ENCODE measurements at regions of chr6 and their contacts with region 1.

Region 1: GRCh38 chr6:24720604-24721460 is 1.9 kb upstream of the C6orf62 start:
- DNase-seq: peak; percentile 97
- ATAC-seq: peak; percentile 82
- H3K4me3 Mint-ChIP-seq: peak overlapping the region; percentile 93
- H3K27ac Mint-ChIP-seq: peak overlapping the region; percentile 99
- H3K4me1 Mint-ChIP-seq: peaks cover 43% of the 10 kb centered on the region
- H3K27me3 Mint-ChIP-seq: no peaks in the 10 kb centered on the region
- CTCF ChIP-seq: no peak

Region 2: DNA sequence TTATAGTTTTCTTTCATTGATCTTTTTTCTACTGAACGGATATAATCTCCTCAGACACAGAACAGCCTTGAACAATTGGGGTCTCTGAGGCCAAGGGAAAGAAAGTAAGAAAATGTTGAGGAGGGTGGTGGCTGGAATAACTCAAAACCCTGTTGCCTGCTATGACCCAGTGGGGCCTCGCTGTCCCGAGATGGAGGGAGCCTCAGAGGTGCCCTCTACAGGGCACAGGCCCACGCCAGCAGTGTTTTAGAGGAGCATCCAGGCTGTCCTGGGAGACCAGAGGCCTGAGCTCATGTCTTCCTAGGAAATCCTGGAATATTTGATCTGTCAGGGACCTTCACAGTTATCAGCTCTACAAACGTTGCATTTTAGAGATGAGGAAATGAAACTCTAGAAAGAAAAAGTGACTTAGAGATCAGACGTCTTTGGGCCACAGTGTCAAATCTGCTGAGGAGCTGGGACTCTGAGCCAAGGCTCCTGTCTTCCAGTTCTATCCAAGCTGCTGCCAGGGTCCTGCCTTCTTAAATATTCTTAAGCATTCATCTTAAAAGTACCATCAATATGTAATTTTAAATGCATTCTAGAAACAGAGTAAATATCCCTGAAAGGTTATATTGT is 199.8 kb before region 1 on chr6:
- CTCF ChIA-PET with region 1: interaction called, 3 read pairs
- POLR2A ChIA-PET with region 1: interaction called, 12 read pairs
- intact Hi-C with region 1: no loop called
- DNase-seq: peak; percentile 35
- ATAC-seq: peak; percentile 40
- H3K4me3 Mint-ChIP-seq: peak overlapping the region; percentile 42
- H3K27ac Mint-ChIP-seq: peak overlapping the region; percentile 88
- H3K4me1 Mint-ChIP-seq: peaks cover 62% of the 10 kb centered on the region
- H3K27me3 Mint-ChIP-seq: no peaks in the 10 kb centered on the region
- CTCF ChIP-seq: no peak

Region 3: GRCh38 chr6:24666641-24667377 is 54.0 kb before region 1 on chr6 and contains the starts of genes ACOT13 and TDP2:
- CTCF ChIA-PET with region 1: interaction called, 3 read pairs
- POLR2A ChIA-PET with region 1: interaction called, 16 read pairs
- intact Hi-C with region 1: loop called (anchors 1 kb)
- DNase-seq: peak; percentile 92
- ATAC-seq: peak; percentile 94
- H3K4me3 Mint-ChIP-seq: peak within 1 kb of the TSS; percentile 99
- H3K27ac Mint-ChIP-seq: peak within 1 kb of the TSS; percentile 96
- H3K4me1 Mint-ChIP-seq: peaks cover 46% of the 10 kb centered on the region
- H3K27me3 Mint-ChIP-seq: no peaks in the 10 kb centered on the region
- CTCF ChIP-seq: no peak
- total RNA-seq, gene ACOT13: 12.0 and 13.8 TPM in 2 replicates
- total RNA-seq, gene TDP2: 48.9 and 51.1 TPM in 2 replicates

Region 4: DNA sequence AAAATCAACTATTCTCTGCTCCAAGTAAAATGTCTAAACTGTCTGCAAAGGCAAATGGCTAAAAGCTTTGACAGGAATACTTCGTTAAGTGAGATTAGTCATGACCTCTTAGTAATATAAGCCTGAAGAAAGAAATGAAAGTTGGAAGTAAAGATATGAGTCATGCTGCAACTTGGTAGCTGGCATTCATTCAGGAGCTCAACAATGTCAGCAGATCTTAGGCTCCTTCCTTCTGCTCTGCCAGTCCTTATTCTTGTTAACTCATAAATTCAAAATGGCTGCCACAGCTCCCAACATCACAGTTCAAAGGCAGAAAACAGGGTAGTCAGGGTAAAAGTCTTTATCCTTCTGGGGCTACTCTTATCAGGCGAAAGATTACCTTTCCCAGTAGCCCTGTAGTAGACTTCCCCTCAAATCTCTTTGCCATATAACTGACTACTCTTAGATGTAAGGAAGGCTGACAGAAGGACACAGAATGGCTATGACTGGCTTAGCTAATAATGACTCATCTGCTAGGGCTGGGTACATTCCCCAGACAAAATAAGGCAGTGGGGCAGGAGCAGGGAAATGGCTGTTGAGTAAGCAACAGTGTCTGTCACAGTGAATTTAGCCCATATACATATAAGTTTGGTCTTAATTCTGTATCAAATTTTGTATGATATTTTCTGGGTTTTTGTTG is 22.6 kb after region 1 on chr6:
- CTCF ChIA-PET with region 1: no interaction called
- POLR2A ChIA-PET with region 1: interaction called, 40 read pairs
- intact Hi-C with region 1: loop called (anchors 1 kb)
- DNase-seq: no peak
- ATAC-seq: peak; percentile 78
- H3K4me3 Mint-ChIP-seq: peak overlapping the region; percentile 55
- H3K27ac Mint-ChIP-seq: peak overlapping the region; percentile 85
- H3K4me1 Mint-ChIP-seq: peaks cover 31% of the 10 kb centered on the region
- H3K27me3 Mint-ChIP-seq: no peaks in the 10 kb centered on the region
- CTCF ChIP-seq: no peak

Region 5: DNA sequence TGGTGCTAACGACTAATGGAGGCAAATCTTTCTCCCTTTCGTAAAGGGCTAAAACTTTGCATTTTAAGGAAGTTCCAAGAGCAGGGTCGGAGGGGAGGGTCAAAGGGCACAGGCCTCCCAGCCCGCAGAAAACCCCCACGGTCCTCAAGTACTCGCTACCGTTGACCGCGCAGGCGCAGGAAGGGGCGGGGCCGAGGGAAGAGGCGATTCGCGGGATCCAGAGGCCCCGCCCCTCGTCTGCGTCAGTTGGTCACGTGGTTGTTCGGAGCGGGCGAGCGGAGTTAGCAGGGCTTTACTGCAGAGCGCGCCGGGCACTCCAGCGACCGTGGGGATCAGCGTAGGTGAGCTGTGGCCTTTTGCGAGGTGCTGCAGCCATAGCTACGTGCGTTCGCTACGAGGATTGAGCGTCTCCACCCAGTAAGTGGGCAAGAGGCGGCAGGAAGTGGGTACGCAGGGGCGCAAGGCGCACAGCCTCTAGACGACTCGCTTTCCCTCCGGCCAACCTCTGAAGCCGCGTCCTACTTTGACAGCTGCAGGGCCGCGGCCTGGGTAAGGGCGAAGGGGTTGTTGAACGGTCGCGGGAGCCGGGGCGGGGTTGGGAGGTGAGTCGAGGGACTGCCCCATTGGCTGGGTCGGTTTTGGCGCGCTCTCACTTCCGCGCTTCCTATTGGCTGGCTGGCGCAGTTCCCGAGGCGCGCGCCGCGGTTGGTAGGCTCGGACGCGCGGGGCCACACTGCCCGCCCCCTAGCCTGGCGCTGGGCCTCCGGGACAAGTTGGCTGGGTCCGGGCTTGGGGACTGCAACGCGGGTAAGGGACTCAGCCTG is 54.1 kb after region 1 on chr6 and contains the start of gene GMNN:
- CTCF ChIA-PET with region 1: no interaction called
- POLR2A ChIA-PET with region 1: interaction called, 20 read pairs
- intact Hi-C with region 1: loop called (anchors 1 kb)
- DNase-seq: peak; percentile 99
- ATAC-seq: peak; percentile 90
- H3K4me3 Mint-ChIP-seq: peak within 1 kb of the TSS; percentile 97
- H3K27ac Mint-ChIP-seq: peak within 1 kb of the TSS; percentile 92
- H3K4me1 Mint-ChIP-seq: peaks cover 22% of the 10 kb centered on the region
- H3K27me3 Mint-ChIP-seq: no peaks in the 10 kb centered on the region
- CTCF ChIP-seq: no peak
- total RNA-seq, gene GMNN: 12.9 and 14.5 TPM in 2 replicates

Region 6: DNA sequence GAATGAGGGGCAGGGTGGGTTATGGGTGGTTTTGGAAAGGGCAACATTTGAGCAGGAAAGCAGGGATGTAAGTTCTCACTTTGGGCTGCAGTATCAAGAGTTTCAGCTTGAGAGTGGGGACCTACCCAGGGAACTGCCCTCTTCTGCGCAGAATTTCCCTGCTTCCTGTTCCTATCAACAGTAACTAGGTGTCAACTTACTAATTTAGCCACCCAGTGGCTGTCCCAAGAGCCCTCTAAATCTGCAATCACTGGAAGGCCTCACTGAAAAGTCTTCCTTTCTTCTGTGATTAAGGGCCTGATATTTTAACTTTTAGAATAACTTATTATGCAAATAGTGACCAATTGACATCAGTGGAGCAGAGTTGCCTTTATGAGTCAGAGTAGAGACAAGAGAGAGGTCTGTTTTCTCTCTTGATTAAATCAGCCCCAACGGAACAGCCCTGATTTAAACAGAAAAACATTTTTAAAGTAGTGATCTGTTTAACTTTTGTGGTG is 333.1 kb after region 1 on chr6:
- CTCF ChIA-PET with region 1: no interaction called
- POLR2A ChIA-PET with region 1: no interaction called
- intact Hi-C with region 1: loop called (anchors 2 kb)
- DNase-seq: no peak
- ATAC-seq: peak; percentile 76
- H3K4me3 Mint-ChIP-seq: peak overlapping the region; percentile 75
- H3K27ac Mint-ChIP-seq: peak overlapping the region; percentile 96
- H3K4me1 Mint-ChIP-seq: peaks cover 96% of the 10 kb centered on the region
- H3K27me3 Mint-ChIP-seq: no peaks in the 10 kb centered on the region
- CTCF ChIP-seq: no peak

Measured in activated B cell treated with CpG ODN at 0.5 μM for 24 hours (primary cell).